ENCODE measurements at regions of chr15 and their contacts with region 1.

Region 1: DNA sequence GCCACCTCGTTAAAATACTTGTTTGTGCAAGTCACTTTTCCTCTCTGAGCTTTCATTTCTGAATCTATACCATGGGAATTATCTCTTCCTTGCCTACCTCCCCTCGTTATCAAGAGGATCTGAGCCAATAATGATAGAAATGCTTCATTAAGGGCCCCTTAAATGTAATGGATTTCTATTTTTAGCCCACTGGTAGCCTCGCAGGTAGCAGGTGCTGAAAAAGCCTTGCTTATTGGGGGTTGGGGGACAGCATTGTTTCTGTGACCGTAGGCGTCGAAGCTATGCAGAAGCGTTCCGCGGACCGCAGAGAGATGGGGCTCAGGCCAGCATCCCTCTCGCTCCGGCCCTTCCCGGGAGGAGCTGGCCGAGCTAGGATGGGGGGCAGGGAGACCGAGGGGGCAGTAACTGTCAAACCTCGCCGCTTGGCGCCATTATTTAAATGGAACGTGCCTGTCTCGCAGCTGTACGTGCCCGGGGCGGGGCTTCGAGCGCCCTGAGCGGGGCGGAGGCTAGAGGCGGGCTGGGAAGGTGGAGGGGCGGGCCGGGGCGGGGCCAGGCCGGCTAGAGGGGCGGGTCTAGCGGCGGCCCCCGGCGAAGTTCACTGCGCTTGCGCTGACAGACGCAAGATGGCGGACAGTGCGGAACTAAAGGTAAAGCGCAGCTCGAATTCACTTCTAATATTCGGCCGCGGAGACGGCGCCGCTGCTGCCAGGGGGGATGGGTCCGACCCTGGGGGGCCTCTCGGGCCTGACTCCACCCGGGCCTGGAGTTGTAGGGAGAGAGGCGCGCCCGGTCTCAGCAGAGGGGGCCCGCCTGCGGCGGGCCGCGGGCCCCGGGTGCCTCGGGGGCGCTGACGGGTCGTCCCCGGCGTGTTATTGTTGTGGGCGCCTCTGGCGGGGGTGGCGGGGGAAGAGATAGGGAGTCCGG is at the start of gene PIAS1:
- DNase-seq: peak; percentile 96 to 98 (median 98)
- ATAC-seq: peak; percentile 92
- H3K4me3 ChIP-seq: peak within 1 kb of the TSS; percentile 97
- H3K27ac ChIP-seq: peak within 1 kb of the TSS; percentile 87
- H3K4me1 ChIP-seq: peaks cover 6 to 24% of the 10 kb centered on the region in 2 experiments; a peak in 3 of 5 replicates
- H3K27me3 ChIP-seq: no peaks in the 10 kb centered on the region
- CTCF ChIP-seq: no peak
- EP300 ChIP-seq: peak; percentile 57
- POLR2A ChIP-seq: peak; percentile 88
- RAD21 ChIP-seq: no peak
- polyA plus RNA-seq, gene PIAS1: 19.4 to 41.4 TPM

Region 2: GRCh38 chr15:67884514-67885487 is 169.2 kb before region 1 on chr15:
- CTCF ChIA-PET with region 1: no interaction called
- POLR2A ChIA-PET with region 1: interaction called, 6 read pairs
- in situ Hi-C with region 1: no loop called
- intact Hi-C with region 1: loop called (anchors 5 kb)
- DNase-seq: peak; percentile 94 to 96 (median 96)
- ATAC-seq: peak; percentile 85
- H3K4me3 ChIP-seq: peak overlapping the region; percentile 41
- H3K27ac ChIP-seq: peak overlapping the region; percentile 84
- H3K4me1 ChIP-seq: peaks cover 37 to 54% of the 10 kb centered on the region in 2 experiments
- H3K27me3 ChIP-seq: no peaks in the 10 kb centered on the region
- CTCF ChIP-seq: no peak
- EP300 ChIP-seq: peak; percentile 69
- POLR2A ChIP-seq: peak; percentile 65
- RAD21 ChIP-seq: peak; percentile 16 to 25; a peak in 2 of 4 replicates

Region 3: DNA sequence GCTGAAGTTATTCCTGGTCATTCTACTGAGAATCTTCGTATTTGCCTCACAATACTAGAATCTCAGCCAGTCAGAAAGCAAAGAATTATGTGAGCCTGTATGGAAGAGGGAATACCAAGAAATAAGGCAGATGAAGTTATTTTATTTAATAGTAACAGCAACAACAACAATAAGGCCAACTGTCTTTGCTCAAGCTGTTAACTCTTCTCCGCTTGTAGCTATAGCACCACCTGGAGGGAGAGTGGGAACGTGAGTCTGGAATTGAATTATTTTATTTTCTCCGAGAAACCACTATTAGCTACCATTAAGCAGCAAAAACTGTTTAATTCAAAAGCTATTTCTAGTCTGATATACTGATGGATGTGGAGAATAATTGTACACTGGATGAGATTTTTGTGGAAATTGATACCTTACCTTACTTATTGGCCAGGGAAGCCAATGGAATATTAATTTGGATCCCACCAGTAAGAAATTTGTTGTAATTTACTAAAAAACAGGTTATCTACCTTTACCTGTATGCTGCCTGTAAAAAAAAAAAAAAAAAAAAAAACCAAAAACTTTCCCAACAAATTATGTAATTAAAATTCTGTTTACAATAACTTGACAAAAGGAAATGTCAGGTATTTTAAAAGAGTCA is 101.1 kb after region 1 on chr15:
- CTCF ChIA-PET with region 1: no interaction called
- POLR2A ChIA-PET with region 1: interaction called, 6 read pairs
- in situ Hi-C with region 1: no loop called
- intact Hi-C with region 1: loop called (anchors 10 kb)
- DNase-seq: peak in 3 of 4 experiments; percentile 24 to 56 (median 26)
- ATAC-seq: peak; percentile 66; the same call in 2 of the 3 replicates
- H3K4me3 ChIP-seq: no peak overlapping the region
- H3K27ac ChIP-seq: no peak overlapping the region
- H3K4me1 ChIP-seq: no peaks in the 10 kb centered on the region
- H3K27me3 ChIP-seq: no peaks in the 10 kb centered on the region
- CTCF ChIP-seq: peak; percentile 56 to 79 (median 58)
- EP300 ChIP-seq: no peak
- POLR2A ChIP-seq: no peak
- RAD21 ChIP-seq: peak; percentile 84 to 85

Region 4: GRCh38 chr15:68447209-68447608 is 393.2 kb after region 1 on chr15:
- CTCF ChIA-PET with region 1: no interaction called
- POLR2A ChIA-PET with region 1: no interaction called
- in situ Hi-C with region 1: no loop called
- intact Hi-C with region 1: no loop called
- DNase-seq: no peak
- ATAC-seq: no peak
- H3K4me3 ChIP-seq: no peak overlapping the region
- H3K27ac ChIP-seq: no peak overlapping the region
- H3K4me1 ChIP-seq: no peaks in the 10 kb centered on the region
- H3K27me3 ChIP-seq: peaks cover 0 to 6% of the 10 kb centered on the region in 2 experiments; a peak in 1 of 5 replicates
- CTCF ChIP-seq: no peak
- EP300 ChIP-seq: no peak
- POLR2A ChIP-seq: no peak
- RAD21 ChIP-seq: no peak

Measured in K562 (cell line).